ENCODE measurements at regions of chr14 and their contacts with region 1.

Region 1: DNA sequence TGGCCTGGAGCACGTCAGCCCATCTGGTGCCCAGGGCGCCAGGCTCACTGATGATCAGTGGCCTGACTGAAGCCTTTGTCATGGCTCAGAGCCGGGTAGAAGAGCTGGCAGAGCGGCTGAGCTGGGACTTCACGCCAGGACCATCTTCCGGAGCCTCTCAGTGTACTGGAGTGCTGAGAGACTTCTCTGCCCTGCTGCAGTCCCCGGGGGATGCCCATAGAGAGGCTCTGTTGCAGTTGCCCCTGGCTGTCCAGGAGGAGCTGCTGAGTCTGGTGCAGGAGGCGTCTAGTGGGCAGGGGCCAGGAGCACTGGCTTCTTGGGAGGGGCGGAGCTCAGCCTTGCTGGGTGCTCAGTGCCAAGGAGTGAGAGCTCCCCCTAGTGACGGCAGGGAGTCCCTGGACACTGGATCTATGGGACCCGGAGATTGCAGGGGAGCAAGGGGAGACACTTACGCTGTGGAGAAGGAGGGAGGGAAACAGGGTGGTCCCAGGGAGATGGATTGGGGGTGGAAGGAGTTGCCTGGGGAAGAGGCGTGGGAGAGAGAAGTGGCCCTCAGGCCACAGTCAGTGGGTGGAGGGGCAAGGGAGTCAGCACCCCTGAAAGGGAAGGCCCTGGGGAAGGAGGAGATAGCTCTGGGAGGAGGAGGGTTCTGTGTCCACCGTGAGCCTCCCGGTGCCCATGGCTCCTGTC is 2.0 kb downstream of the KHNYN start:
- DNase-seq: peak; percentile 93
- ATAC-seq: peak; percentile 84
- H3K4me3 ChIP-seq: peak overlapping the region; percentile 86
- H3K27ac ChIP-seq: peak overlapping the region; percentile 93
- H3K4me1 ChIP-seq: peaks cover 39% of the 10 kb centered on the region
- H3K27me3 ChIP-seq: no peaks in the 10 kb centered on the region
- CTCF ChIP-seq: peak; percentile 94

Region 2: GRCh38 chr14:24332268-24332993 is 99.3 kb before region 1 on chr14:
- intact Hi-C with region 1: loop called (anchors 5 kb)
- DNase-seq: peak; percentile 82
- ATAC-seq: peak; percentile 73
- H3K4me3 ChIP-seq: peak overlapping the region; percentile 37
- H3K27ac ChIP-seq: no peak overlapping the region
- H3K4me1 ChIP-seq: peaks cover 67% of the 10 kb centered on the region
- H3K27me3 ChIP-seq: peaks cover 10% of the 10 kb centered on the region
- CTCF ChIP-seq: peak; percentile 75

Region 3: GRCh38 chr14:24366721-24367513 is 64.8 kb before region 1 on chr14:
- intact Hi-C with region 1: loop called (anchors 5 kb)
- DNase-seq: peak; percentile 95
- ATAC-seq: peak; percentile 86
- H3K4me3 ChIP-seq: peak overlapping the region; percentile 56
- H3K27ac ChIP-seq: peak overlapping the region; percentile 83
- H3K4me1 ChIP-seq: peaks cover 23% of the 10 kb centered on the region
- H3K27me3 ChIP-seq: no peaks in the 10 kb centered on the region
- CTCF ChIP-seq: no peak

Measured in upper lobe of right lung (tissue), 1 donor.